MCF 10A (cell line): ENCODE measurements at regions of chr3 and their contacts with region 1.

Region 1: GRCh38 chr3:27533718-27534573 is 49.8 kb upstream of the SLC4A7 start:
- DNase-seq: peak; percentile 97
- H3K4me3 Mint-ChIP-seq: peak overlapping the region; percentile 33
- H3K27ac Mint-ChIP-seq: peak overlapping the region; percentile 98
- H3K4me1 Mint-ChIP-seq: peaks cover 34% of the 10 kb centered on the region
- H3K27me3 Mint-ChIP-seq: no peaks in the 10 kb centered on the region
- CTCF ChIP-seq: peak; percentile 32

Region 2: GRCh38 chr3:27484015-27484844 is 49.7 kb before region 1 on chr3 and contains the start of gene SLC4A7:
- CTCF ChIA-PET with region 1: interaction called, 3 read pairs
- POLR2A ChIA-PET with region 1: interaction called, 95 read pairs
- intact Hi-C with region 1: loop called (anchors 1 kb)
- DNase-seq: peak; percentile 94
- H3K4me3 Mint-ChIP-seq: peak within 1 kb of the TSS; percentile 100
- H3K27ac Mint-ChIP-seq: peak within 1 kb of the TSS; percentile 97
- H3K4me1 Mint-ChIP-seq: peaks cover 10% of the 10 kb centered on the region
- H3K27me3 Mint-ChIP-seq: no peaks in the 10 kb centered on the region
- CTCF ChIP-seq: no peak
- total RNA-seq, gene SLC4A7: 37.2 and 41.9 TPM in 2 replicates

Region 3: DNA sequence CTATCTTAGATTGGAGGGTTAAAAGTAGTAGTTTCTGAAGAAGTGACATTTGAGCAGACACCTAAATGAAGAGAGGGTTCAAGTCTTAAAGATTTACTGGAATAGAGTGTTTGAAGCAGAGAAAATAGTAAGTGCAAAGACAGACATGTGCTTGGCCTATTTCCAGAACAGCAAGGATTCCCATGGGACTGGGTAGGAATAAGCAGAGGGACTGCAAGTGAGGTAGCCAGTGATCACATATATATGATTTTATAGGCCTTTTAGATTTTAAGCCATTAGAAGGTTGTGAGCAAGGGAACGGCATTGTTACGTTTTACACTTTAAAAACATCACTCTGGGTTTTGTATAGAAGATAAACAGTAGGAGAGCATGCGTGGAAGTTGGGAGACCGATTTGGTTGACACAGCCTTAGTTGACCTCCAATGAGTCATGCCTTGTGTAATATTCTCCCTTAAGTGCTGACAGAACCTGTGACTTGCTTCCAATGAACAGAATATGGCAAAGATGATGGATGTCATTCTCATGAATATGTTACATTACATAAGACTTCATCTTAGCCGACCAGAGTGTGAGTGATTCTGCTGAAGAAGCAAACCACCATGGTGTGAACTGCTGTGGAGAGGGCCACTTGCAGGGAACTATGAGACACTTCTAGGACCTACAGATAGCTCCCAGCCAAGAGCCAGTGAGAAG is 12.6 kb before region 1 on chr3:
- CTCF ChIA-PET with region 1: interaction called, 6 read pairs
- POLR2A ChIA-PET with region 1: interaction called, 50 read pairs
- intact Hi-C with region 1: no loop called
- DNase-seq: peak; percentile 96
- H3K4me3 Mint-ChIP-seq: no peak overlapping the region
- H3K27ac Mint-ChIP-seq: peak overlapping the region; percentile 29
- H3K4me1 Mint-ChIP-seq: peaks cover 27% of the 10 kb centered on the region
- H3K27me3 Mint-ChIP-seq: no peaks in the 10 kb centered on the region
- CTCF ChIP-seq: no peak

Region 4: GRCh38 chr3:27590437-27591298 is 56.7 kb after region 1 on chr3:
- CTCF ChIA-PET with region 1: no interaction called
- POLR2A ChIA-PET with region 1: interaction called, 14 read pairs
- intact Hi-C with region 1: no loop called
- DNase-seq: peak; percentile 41
- H3K4me3 Mint-ChIP-seq: no peak overlapping the region
- H3K27ac Mint-ChIP-seq: peak overlapping the region; percentile 1
- H3K4me1 Mint-ChIP-seq: peaks cover 24% of the 10 kb centered on the region
- H3K27me3 Mint-ChIP-seq: no peaks in the 10 kb centered on the region
- CTCF ChIP-seq: no peak

Region 5: GRCh38 chr3:27681245-27681748 is 147.4 kb after region 1 on chr3:
- CTCF ChIA-PET with region 1: interaction called, 11 read pairs
- POLR2A ChIA-PET with region 1: interaction called, 107 read pairs
- intact Hi-C with region 1: loop called (anchors 5 kb)
- DNase-seq: peak; percentile 86
- H3K4me3 Mint-ChIP-seq: peak overlapping the region; percentile 74
- H3K27ac Mint-ChIP-seq: no peak overlapping the region
- H3K4me1 Mint-ChIP-seq: peaks cover 23% of the 10 kb centered on the region
- H3K27me3 Mint-ChIP-seq: no peaks in the 10 kb centered on the region
- CTCF ChIP-seq: peak; percentile 66